AG04449 (cell line): ENCODE measurements at regions of chr11 and their contacts with region 1.

Region 1: DNA sequence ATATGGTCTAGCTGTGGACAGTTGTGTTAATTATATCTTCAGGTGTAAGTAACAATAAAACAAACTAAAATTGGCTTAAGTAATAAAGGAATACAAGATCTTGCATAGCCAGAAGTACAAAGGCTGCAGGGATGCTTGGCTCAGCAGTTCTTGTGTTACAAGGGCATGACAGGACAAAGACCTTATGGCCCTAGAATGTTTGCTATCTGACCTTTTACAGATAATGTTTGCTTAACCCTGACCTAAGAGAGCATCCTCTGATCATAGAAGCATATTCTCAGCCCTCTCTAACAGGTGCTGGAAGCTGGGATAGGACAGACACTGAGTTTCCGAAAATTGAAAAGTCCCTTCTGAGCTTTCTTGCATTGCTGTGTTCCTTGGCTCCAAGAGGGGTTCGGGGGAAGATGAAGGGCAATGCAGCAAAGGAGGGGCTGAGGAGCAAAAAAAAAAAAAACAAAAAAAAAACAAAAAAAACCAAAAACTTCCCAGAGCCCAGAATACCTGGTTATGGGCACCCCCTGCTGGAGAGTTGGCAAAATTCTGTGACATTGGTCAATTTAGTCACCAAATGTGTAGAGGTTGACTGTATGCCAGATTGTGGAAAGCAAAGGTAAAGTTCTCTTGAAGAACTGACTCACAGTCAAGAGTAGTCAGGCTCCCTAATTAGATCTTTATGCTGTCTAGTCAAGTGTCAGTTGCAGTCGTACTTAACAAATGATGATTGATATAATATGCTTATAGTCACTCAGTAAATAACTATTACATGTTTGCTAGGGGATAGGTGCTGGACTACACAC is 10.4 kb upstream of the HIKESHI start:
- DNase-seq: no peak
- H3K4me3 ChIP-seq: no peak overlapping the region
- CTCF ChIP-seq: peak; percentile 45

Region 2: GRCh38 chr11:85941380-85941973 is 350.2 kb before region 1 on chr11:
- CTCF ChIA-PET with region 1: interaction called, 47 read pairs
- POLR2A ChIA-PET with region 1: no interaction called
- DNase-seq: no peak
- H3K4me3 ChIP-seq: no peak overlapping the region
- CTCF ChIP-seq: peak; percentile 66

Region 3: GRCh38 chr11:86278226-86278625 is 13.4 kb before region 1 on chr11:
- CTCF ChIA-PET with region 1: interaction called, 11 read pairs
- POLR2A ChIA-PET with region 1: no interaction called
- DNase-seq: no peak
- H3K4me3 ChIP-seq: no peak overlapping the region
- CTCF ChIP-seq: no peak

Region 4: DNA sequence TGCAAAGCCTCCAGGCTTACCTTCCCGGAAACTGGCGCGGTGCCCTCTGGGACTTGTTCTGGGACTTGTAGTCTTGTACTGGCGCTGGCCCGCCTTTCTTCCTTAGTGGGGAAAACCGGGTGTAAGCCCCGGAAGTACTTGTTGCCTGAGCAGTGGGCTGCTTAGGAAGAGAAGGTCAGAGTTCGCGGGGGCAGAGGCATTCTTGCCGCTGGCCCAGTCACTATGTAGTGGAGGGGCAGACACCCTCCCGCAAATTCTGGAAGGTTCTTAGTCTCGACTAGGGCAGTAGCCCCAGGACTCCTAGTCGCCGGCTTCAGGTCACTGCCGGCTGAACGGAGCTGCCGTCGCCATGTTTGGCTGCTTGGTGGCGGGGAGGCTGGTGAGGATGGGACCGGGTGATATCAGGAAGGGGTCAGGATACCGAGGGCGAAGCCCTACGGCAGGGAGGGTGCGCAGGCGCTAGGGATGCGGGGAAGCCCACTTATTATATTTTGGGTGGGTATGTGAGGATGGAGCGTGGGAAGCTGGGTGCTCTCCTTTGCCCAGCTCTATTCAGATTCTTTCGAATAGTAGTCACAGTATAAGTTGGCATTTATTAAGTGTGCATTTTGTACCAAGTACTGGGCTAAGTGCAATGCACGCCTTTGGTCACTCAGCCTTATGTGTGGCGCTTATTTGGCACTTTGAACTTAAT is 10.6 kb after region 1 on chr11 and contains the start of gene HIKESHI:
- CTCF ChIA-PET with region 1: interaction called, 16 read pairs
- POLR2A ChIA-PET with region 1: no interaction called
- DNase-seq: peak; percentile 88
- H3K4me3 ChIP-seq: peak within 1 kb of the TSS; percentile 86
- CTCF ChIP-seq: no peak